ENCODE measurements at regions of chr13 and their contacts with region 1.

Region 1: GRCh38 chr13:46489586-46490023 is 63.4 kb upstream of the LRCH1 start:
- DNase-seq: no peak
- H3K4me3 Mint-ChIP-seq: no peak overlapping the region
- H3K27ac Mint-ChIP-seq: no peak overlapping the region
- H3K4me1 Mint-ChIP-seq: peaks cover 2% of the 10 kb centered on the region
- H3K27me3 Mint-ChIP-seq: peaks cover 7% of the 10 kb centered on the region

Region 2: DNA sequence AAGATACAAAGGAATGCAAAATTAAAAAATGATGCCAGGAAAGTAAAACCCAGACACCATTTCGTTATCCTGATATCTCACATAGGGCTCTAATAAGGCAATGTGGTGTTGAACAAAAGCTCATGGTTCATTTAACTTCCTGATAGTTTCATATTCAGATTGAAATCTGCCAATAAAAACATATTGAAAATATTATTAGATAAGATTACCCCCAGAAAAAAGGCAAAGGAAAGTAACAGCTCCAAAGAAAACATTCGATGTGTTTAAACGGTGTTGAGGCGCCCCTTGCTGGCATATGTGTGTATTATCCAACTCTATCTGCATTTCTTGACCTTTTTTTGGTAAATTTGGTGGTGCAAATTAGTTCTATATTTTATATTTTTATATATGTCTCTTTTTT is 231.4 kb after region 1 on chr13:
- intact Hi-C with region 1: loop called (anchors 1 kb)
- DNase-seq: no peak
- H3K4me3 Mint-ChIP-seq: no peak overlapping the region
- H3K27ac Mint-ChIP-seq: no peak overlapping the region
- H3K4me1 Mint-ChIP-seq: peaks cover 15% of the 10 kb centered on the region
- H3K27me3 Mint-ChIP-seq: no peaks in the 10 kb centered on the region

Region 3: DNA sequence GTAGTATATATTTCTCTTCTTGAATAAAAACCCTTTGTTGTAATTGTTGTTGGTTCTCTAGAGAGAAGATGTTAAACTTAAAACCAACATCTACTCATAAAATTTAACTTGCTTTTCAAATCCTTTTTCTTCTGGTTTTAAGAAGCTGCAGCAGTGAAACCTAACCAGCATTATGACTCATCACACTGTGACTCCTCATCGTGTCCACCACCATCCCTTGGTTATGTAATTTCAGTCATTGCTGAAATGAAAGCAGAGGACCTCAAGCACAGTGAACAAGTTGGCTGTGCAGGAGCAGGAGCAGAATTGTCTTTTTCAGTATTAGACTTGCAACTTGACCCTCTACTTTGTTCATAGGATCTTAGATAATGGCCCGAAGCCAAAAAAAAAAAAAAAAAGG is 472.1 kb after region 1 on chr13:
- intact Hi-C with region 1: no loop called
- DNase-seq: no peak
- H3K4me3 Mint-ChIP-seq: no peak overlapping the region
- H3K27ac Mint-ChIP-seq: no peak overlapping the region
- H3K4me1 Mint-ChIP-seq: no peaks in the 10 kb centered on the region
- H3K27me3 Mint-ChIP-seq: peaks cover 1% of the 10 kb centered on the region